ENCODE measurements at regions of chr2 and their contacts with region 1.

Region 1: GRCh38 chr2:96208143-96209010 is at the start of gene STARD7:
- DNase-seq: peak; percentile 99
- H3K4me3 Mint-ChIP-seq: peak within 1 kb of the TSS; percentile 96
- H3K27ac Mint-ChIP-seq: peak within 1 kb of the TSS; percentile 90
- H3K4me1 Mint-ChIP-seq: peaks cover 50% of the 10 kb centered on the region
- H3K27me3 Mint-ChIP-seq: no peaks in the 10 kb centered on the region
- total RNA-seq, gene STARD7: 212 and 217 TPM in 2 replicates

Region 2: DNA sequence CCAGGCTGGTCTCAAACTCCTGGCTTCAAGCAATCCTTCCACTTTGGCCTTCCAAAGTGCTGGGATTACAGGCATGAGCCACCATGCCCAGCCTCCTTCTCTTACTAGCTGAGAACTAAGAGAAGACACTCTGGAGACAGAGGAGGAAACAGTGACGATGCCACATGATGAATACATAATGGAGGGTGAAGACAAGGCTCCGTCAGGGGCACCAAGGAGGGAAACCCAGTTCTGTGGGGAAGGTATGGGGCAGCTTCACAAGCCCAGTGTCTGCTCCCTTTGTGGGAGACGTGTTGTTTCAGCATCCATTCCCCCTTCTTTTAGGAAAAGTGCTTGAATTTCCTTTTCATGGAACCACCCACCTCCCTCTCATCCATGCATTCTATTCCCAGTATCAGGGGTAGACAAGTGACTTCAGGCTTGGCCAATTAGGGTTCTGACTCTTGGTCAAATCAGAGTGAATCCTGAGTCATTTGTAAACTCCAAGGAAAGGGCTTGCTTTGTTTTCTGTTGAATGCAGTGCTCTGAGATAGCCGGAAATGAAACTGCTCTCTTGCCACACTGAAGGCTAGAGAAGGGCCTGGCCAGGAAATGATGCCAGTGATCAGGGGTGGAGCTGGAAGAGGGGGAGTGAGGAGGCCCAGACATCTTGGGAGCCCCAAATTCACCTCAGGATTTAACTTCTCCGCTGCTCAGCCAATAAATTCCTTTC is 33.7 kb after region 1 on chr2:
- intact Hi-C with region 1: loop called (anchors 2 kb)
- DNase-seq: peak; percentile 89
- H3K4me3 Mint-ChIP-seq: peak overlapping the region; percentile 69
- H3K27ac Mint-ChIP-seq: peak overlapping the region; percentile 93
- H3K4me1 Mint-ChIP-seq: peaks cover 45% of the 10 kb centered on the region
- H3K27me3 Mint-ChIP-seq: no peaks in the 10 kb centered on the region

Region 3: GRCh38 chr2:96344011-96344410 is 135.6 kb after region 1 on chr2:
- intact Hi-C with region 1: loop called (anchors 5 kb)
- DNase-seq: peak; percentile 75
- H3K4me3 Mint-ChIP-seq: no peak overlapping the region
- H3K27ac Mint-ChIP-seq: peak overlapping the region; percentile 75
- H3K4me1 Mint-ChIP-seq: peaks cover 47% of the 10 kb centered on the region
- H3K27me3 Mint-ChIP-seq: no peaks in the 10 kb centered on the region